ENCODE measurements at regions of chr5 and their contacts with region 1.

Region 1: GRCh38 chr5:40879163-40879942 is 29.9 kb upstream of the C7 start:
- DNase-seq: no peak
- H3K4me3 Mint-ChIP-seq: no peak overlapping the region
- H3K27ac Mint-ChIP-seq: no peak overlapping the region
- H3K4me1 Mint-ChIP-seq: peaks cover 4% of the 10 kb centered on the region
- H3K27me3 Mint-ChIP-seq: peaks cover 1% of the 10 kb centered on the region

Region 2: GRCh38 chr5:39714036-39714698 is 1165.2 kb before region 1 on chr5:
- CTCF ChIA-PET with region 1: no interaction called
- POLR2A ChIA-PET with region 1: no interaction called
- intact Hi-C with region 1: loop called (anchors 1 kb)
- DNase-seq: peak; percentile 29
- H3K4me3 Mint-ChIP-seq: no peak overlapping the region
- H3K27ac Mint-ChIP-seq: no peak overlapping the region
- H3K4me1 Mint-ChIP-seq: no peaks in the 10 kb centered on the region
- H3K27me3 Mint-ChIP-seq: no peaks in the 10 kb centered on the region

Region 3: DNA sequence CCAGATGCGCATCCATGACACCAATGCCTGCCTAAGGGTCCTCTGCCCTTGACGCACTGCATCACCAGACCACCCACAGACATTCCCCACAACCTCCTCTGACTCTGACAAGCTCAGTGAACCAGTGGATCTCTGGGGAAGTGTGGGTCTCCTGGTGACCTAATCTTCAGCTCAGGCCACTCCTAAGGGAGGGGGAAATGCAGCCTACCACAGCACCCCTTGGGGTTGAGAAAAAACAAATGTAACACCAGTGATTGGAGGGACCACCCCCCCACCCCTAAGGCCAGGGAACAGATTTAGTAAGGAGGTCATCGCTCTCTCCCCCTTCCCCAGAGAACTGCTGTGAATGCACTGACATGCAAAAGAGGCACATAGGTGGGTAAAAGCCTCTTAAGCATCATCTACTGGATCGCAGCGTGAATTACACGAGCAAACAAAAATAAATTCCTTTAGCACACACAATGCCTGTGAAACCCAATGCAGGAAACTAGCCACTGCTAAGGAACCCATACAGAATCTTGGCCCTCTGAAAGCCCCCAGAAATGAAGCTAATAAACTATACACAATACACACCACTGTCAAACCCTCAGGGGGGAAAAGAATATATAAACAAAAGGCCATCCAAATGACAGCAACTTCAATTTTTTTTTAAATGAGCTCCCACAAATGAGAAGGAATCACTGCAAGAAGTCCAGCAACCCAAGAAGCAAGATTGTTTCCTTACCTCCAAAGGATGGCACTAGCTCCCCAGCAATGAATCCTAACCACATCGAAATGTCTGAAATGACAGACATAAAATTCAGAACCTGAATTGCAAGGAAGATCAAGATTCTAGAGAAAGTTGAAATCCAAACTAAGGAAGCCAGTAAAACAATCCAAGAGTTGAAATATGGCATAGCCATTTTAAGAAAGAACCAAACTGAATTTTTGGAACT is 713.3 kb before region 1 on chr5:
- CTCF ChIA-PET with region 1: no interaction called
- POLR2A ChIA-PET with region 1: no interaction called
- intact Hi-C with region 1: loop called (anchors 5 kb)
- DNase-seq: peak; percentile 32
- H3K4me3 Mint-ChIP-seq: no peak overlapping the region
- H3K27ac Mint-ChIP-seq: no peak overlapping the region
- H3K4me1 Mint-ChIP-seq: peaks cover 12% of the 10 kb centered on the region
- H3K27me3 Mint-ChIP-seq: peaks cover 2% of the 10 kb centered on the region

Region 4: DNA sequence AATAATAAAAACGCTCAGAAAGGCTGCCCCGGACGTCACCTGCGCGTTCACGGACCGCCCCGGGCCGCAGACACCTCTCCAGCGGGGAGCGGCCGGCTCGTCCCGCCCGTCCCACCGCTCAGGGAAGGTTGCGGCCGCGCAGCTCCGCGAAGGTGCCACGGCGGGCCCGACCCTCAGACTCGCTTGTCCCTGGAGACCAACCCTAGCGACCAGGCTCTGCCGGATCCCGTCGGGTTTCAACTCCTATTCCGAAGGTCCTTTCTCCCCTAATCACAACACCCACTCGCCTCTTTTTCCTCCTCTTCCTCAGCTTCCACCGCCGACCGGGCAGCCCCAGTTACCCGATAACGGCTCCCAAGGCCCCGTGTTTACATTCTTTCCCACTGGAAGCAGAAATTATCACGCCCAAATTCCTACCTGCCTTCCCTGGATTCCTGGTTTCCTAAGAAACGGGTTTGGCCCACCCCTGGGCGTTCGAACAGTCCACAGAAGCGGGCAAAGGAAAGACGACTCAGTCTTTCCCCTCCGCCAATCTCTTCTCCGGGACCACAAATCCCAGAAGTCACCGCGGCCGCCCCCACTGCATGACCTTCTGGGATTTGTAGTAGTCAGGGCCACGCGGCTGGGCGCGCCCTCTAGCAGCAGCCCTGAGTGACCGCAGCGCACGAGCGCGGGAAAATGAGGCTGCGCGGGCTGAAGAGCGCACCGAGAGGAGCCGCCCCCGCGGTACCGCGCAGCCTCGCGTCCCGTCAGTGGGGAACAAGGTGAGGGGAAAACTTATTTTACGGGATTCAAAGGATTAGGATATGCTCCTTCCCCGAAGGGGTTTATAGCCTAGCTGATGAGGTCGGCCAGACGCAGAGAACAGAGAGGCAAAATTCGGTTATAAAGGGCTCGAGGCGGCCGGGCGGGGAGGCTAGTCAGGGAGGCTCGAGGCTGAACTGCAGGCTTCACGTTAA is 123.7 kb before region 1 on chr5 and contains the start of gene TTC33:
- CTCF ChIA-PET with region 1: interaction called, 4 read pairs
- POLR2A ChIA-PET with region 1: interaction called, 3 read pairs
- intact Hi-C with region 1: loop called (anchors 1 kb)
- DNase-seq: peak; percentile 98
- H3K4me3 Mint-ChIP-seq: peak within 1 kb of the TSS; percentile 21
- H3K27ac Mint-ChIP-seq: no peak within 1 kb of the TSS
- H3K4me1 Mint-ChIP-seq: peaks cover 17% of the 10 kb centered on the region
- H3K27me3 Mint-ChIP-seq: no peaks in the 10 kb centered on the region
- total RNA-seq, gene TTC33: 30.2 to 34.1 TPM

Region 5: GRCh38 chr5:40853632-40854192 is 25.6 kb before region 1 on chr5:
- CTCF ChIA-PET with region 1: no interaction called
- POLR2A ChIA-PET with region 1: no interaction called
- intact Hi-C with region 1: no loop called
- DNase-seq: no peak
- H3K4me3 Mint-ChIP-seq: no peak overlapping the region
- H3K27ac Mint-ChIP-seq: no peak overlapping the region
- H3K4me1 Mint-ChIP-seq: no peaks in the 10 kb centered on the region
- H3K27me3 Mint-ChIP-seq: no peaks in the 10 kb centered on the region

Region 6: DNA sequence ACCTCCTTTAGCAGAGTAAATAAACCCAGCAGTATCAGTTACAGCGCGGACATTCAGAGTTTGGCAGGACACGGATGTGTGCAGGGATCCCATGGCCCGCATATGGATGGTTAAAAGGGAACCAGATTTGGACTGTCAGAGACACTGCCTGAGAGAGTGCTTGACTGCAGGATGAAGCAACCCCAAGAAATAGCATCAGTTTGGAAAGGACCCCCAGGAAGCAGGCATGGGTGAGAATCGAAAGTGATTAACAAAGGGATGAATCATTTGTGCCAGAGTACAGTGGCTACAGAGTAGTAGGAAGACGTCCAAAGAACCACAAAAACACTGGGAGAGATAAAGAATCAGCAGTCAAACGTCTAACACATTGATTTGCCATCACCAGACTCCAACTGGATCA is 35.5 kb after region 1 on chr5:
- CTCF ChIA-PET with region 1: no interaction called
- POLR2A ChIA-PET with region 1: no interaction called
- intact Hi-C with region 1: no loop called
- DNase-seq: no peak
- H3K4me3 Mint-ChIP-seq: no peak overlapping the region
- H3K27ac Mint-ChIP-seq: no peak overlapping the region
- H3K4me1 Mint-ChIP-seq: no peaks in the 10 kb centered on the region
- H3K27me3 Mint-ChIP-seq: peaks cover 12% of the 10 kb centered on the region

Measured in activated CD4-positive, alpha-beta memory T cell treated with anti-CD3 and anti-CD28 coated beads for 36 hours (primary cell).